ENCODE measurements at regions of chr6 and their contacts with region 1.

Region 1: DNA sequence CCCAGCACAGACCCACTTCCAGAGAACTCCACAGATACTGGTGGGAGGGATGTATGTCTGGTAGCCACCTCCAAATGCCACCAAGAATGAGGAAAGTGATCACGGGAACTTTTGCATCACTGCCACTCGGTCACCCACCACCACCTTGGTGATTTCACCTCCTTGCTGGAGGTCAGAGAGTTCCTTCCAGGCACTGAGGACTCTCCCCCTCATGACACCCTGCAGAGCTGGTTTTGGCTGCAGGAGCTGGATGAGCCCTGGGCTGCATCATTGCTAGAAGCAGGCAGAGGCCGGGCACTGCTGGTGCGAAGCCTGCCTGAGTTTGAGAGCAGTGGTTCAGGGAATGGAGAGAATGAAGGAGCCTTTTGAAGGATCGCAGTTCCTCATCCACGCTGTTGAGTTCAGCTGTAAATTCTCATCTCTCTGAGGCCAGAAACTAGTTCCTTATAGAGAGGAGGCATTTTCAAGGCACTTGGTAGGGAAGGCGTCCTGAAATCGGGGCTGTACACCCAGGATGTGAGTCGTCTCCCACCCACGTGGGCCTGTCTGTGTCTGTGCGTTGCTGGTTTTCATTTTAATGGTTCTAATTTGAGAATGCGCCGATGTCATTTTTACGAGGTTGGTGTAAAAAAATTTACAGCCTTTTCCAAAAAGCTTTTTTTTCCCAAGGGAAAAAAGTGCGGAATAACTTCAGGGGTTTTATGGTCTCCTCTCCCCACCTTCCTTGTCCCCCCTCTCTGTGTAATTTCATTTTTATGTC is 25.0 kb downstream of the FOXP4 start:
- DNase-seq: no peak
- H3K4me3 ChIP-seq: no peak overlapping the region
- H3K27ac ChIP-seq: no peak overlapping the region
- H3K4me1 ChIP-seq: peaks cover 7% of the 10 kb centered on the region
- H3K27me3 ChIP-seq: no peaks in the 10 kb centered on the region
- CTCF ChIP-seq: no peak

Region 2: DNA sequence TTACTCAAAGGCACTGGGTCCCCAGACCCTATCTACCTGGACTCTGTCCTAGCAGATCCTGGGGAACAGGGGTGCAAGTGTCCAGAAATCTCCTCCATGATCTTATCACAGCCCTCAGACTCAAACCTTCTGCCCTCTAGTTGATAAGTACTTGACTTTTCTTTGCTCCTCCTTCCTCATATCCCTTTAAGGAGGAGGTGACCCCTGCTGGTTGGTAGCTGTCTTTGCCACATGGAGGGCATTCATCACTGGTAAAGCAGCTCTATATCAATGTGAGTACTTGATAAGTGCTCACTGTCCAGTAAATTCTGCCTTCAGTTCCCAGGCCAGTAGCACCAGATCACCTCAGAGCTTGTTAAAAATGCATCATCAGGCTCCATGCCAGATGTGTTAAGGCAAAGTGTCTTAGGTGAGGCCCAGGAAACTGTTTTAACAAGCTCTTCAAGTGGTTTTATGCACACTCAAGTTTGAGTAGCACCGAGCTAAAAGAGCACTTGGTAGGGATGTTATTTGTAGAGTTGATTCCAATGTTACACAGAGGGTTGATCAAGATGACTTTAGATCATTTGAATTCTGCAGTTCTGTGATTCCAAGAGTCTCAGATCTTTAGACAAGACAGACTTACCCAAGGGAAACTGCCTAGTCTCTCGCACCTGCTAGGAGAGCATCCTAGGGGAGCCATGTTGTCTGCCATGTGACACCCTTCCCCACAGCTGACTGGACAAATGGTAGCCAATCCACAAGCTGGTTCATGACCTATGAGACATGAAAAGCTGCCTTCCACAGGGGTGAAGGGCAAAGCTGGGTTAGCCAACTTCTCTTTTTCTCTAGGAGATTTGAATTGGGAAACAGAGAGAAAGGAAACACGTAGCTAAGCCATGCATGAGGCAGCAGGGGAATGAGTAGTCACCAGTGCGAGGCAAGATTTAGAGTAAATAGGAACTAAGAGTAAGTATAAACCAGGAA is 388.8 kb before region 1 on chr6:
- CTCF ChIA-PET with region 1: interaction called, 11 read pairs
- dilution Hi-C with region 1: no loop called
- in situ Hi-C with region 1: no loop called
- intact Hi-C with region 1: no loop called
- DNase-seq: peak; percentile 70
- H3K4me3 ChIP-seq: no peak overlapping the region
- H3K27ac ChIP-seq: no peak overlapping the region
- H3K4me1 ChIP-seq: peaks cover 12% of the 10 kb centered on the region
- H3K27me3 ChIP-seq: no peaks in the 10 kb centered on the region
- CTCF ChIP-seq: peak; percentile 90 to 97

Region 3: GRCh38 chr6:41505122-41506049 is 65.8 kb before region 1 on chr6:
- CTCF ChIA-PET with region 1: no interaction called
- dilution Hi-C with region 1: loop called (anchors 5 kb)
- in situ Hi-C with region 1: no loop called
- intact Hi-C with region 1: no loop called
- DNase-seq: peak; percentile 27
- H3K4me3 ChIP-seq: no peak overlapping the region
- H3K27ac ChIP-seq: no peak overlapping the region
- H3K4me1 ChIP-seq: peaks cover 9% of the 10 kb centered on the region
- H3K27me3 ChIP-seq: peaks cover 13% of the 10 kb centered on the region
- CTCF ChIP-seq: no peak